Ovary (tissue), 10 donors: ENCODE measurements at regions of chr16 and their contacts with region 1.

Region 1: DNA sequence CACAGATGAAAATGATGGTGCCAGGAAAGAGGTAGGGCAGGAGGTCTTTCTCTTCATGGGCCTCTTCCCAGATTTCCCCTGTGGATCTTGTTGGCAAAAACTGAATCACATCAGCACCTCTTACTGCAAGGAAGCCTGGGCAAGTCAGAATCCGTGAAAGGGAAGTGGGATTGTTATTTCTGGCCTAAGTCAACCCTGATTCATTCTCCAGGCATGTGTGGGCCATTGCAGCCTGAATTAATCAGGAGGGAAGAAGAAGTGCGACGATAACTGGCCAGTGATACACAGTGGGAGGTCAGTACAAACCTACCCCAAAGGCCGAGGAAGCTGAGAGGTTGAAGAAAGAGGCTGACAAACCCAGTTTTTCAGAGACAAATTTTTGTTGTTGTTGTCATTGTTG is 17.9 kb upstream of the NSMCE1 start:
- DNase-seq: no peak
- H3K4me3 ChIP-seq: no peak overlapping the region
- H3K27ac ChIP-seq: no peak overlapping the region
- H3K4me1 ChIP-seq: no peaks in the 10 kb centered on the region
- H3K27me3 ChIP-seq: no peaks in the 10 kb centered on the region
- CTCF ChIP-seq: no peak
- EP300 ChIP-seq: no peak
- POLR2A ChIP-seq: no peak

Region 2: GRCh38 chr16:26987597-26988010 is 298.8 kb before region 1 on chr16:
- intact Hi-C with region 1: no loop called
- DNase-seq: no peak
- H3K4me3 ChIP-seq: no peak overlapping the region
- H3K27ac ChIP-seq: no peak overlapping the region
- H3K4me1 ChIP-seq: no peaks in the 10 kb centered on the region
- H3K27me3 ChIP-seq: no peaks in the 10 kb centered on the region
- CTCF ChIP-seq: no peak
- EP300 ChIP-seq: no peak
- POLR2A ChIP-seq: no peak

Region 3: GRCh38 chr16:27154705-27155521 is 131.5 kb before region 1 on chr16:
- intact Hi-C with region 1: no loop called
- DNase-seq: peak; percentile 11 to 50 (median 43)
- H3K4me3 ChIP-seq: no peak overlapping the region
- H3K27ac ChIP-seq: no peak overlapping the region
- H3K4me1 ChIP-seq: no peaks in the 10 kb centered on the region
- H3K27me3 ChIP-seq: no peaks in the 10 kb centered on the region
- CTCF ChIP-seq: peak; percentile 58 to 66 (median 64)
- EP300 ChIP-seq: no peak
- POLR2A ChIP-seq: no peak

Region 4: GRCh38 chr16:27347930-27348685 is 61.7 kb after region 1 on chr16:
- intact Hi-C with region 1: loop called in 1 of 4 experiments (anchors 10 kb)
- DNase-seq: no peak
- H3K4me3 ChIP-seq: no peak overlapping the region
- H3K27ac ChIP-seq: no peak overlapping the region
- H3K4me1 ChIP-seq: no peaks in the 10 kb centered on the region
- H3K27me3 ChIP-seq: no peaks in the 10 kb centered on the region
- CTCF ChIP-seq: no peak
- EP300 ChIP-seq: no peak
- POLR2A ChIP-seq: no peak